ENCODE measurements at regions of chr17 and their contacts with region 1.

Region 1: DNA sequence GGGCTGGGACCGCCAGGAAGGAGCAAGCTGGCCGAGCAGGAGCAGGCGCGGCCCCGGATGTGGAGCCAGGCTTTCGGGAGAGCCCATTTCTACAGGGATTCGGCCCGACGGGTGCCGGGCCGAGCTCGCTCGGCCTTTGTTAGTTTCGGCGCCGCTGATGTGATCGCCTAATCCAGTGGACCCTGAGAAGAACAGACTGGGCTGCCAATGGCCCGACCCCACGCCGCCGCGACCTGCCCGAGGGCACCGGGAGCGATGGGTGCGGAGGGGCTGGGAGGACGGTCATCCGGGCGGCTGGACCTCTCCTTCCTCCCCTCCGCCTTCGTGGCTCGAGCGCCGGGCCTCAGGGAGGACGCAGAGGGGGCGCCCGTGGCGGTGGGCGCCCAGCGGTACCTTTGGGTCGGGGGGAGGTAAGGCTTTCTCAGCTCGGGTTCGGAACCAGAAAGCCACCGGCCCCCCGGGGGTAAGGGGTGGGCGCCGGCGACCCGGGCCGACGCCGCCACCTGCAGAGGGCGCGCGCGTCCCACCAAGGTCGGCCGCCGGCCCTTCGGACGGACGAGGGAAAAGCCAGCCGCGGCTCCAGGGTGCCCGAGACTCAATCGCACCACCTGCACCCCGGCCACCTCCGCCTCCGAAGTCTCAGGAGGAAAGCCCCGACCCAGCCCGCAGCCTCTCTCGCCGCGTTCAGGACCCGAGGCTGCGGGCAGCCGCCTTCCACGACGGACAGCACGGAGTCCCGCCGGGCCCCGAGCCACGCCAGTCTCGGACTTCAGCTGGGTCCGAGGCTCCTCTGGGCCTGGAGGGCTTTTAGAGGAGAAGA is 7.1 kb downstream of the CBX8 start:
- DNase-seq: no peak
- H3K4me3 ChIP-seq: no peak overlapping the region
- H3K27ac ChIP-seq: no peak overlapping the region
- H3K4me1 ChIP-seq: peaks cover 6% of the 10 kb centered on the region
- H3K27me3 ChIP-seq: peaks cover 40 to 57% of the 10 kb centered on the region in 2 experiments
- CTCF ChIP-seq: peak; percentile 71 to 84
- POLR2A ChIP-seq: no peak

Region 2: DNA sequence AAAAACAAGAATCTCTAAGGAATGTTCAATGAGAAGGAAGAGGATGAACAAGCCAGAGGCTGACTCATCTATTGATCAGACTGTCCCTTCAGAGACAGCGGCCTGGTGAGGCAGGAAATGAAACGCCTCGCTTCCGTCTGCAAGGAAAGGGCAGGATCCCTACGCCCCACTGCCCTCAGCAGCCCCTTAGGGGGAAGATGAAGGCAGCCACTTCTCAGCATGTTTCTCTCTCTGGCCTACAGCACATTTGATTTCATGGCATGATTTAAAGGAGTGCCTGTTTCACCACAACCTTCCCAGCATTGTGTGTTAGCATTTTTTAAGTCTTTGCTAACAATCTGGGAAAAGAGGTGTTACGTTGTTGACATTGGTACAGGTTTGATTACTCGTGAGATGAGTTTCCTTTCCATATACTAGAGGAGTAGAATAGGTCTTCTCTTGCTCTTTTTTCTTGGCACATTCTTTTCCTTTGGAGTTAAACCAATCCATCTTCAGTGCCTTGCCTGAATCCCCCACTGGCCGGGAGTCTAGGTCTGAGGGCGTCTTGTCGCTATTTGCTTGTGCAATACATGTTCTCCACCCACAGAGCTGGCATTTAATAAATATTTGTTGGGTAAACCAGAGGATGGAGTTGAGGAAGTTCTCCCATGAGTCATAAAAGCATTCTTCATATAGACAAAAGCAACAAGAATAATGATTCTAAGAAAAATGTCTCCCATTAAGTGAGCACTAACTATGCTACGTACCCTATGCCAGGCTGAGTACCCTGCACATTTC is 226.3 kb before region 1 on chr17:
- CTCF ChIA-PET with region 1: no interaction called
- POLR2A ChIA-PET with region 1: no interaction called
- dilution Hi-C with region 1: no loop called
- intact Hi-C with region 1: no loop called
- DNase-seq: no peak
- H3K4me3 ChIP-seq: no peak overlapping the region
- H3K27ac ChIP-seq: peak overlapping the region; percentile 12
- H3K4me1 ChIP-seq: peaks cover 12% of the 10 kb centered on the region
- H3K27me3 ChIP-seq: no peaks in the 10 kb centered on the region
- CTCF ChIP-seq: no peak
- POLR2A ChIP-seq: no peak

Region 3: GRCh38 chr17:79664921-79665737 is 124.6 kb before region 1 on chr17:
- CTCF ChIA-PET with region 1: no interaction called
- POLR2A ChIA-PET with region 1: no interaction called
- dilution Hi-C with region 1: no loop called
- intact Hi-C with region 1: no loop called
- DNase-seq: peak; percentile 48
- H3K4me3 ChIP-seq: no peak overlapping the region
- H3K27ac ChIP-seq: no peak overlapping the region
- H3K4me1 ChIP-seq: peaks cover 10% of the 10 kb centered on the region
- H3K27me3 ChIP-seq: peaks cover 0 to 3% of the 10 kb centered on the region in 2 experiments
- CTCF ChIP-seq: no peak
- POLR2A ChIP-seq: no peak

Region 4: GRCh38 chr17:79747508-79748295 is 42.0 kb before region 1 on chr17:
- CTCF ChIA-PET with region 1: interaction called, 20 read pairs
- POLR2A ChIA-PET with region 1: no interaction called
- dilution Hi-C with region 1: no loop called
- intact Hi-C with region 1: no loop called
- DNase-seq: no peak
- H3K4me3 ChIP-seq: no peak overlapping the region
- H3K27ac ChIP-seq: no peak overlapping the region
- H3K4me1 ChIP-seq: no peaks in the 10 kb centered on the region
- H3K27me3 ChIP-seq: peaks cover 27 to 45% of the 10 kb centered on the region in 2 experiments
- CTCF ChIP-seq: no peak
- POLR2A ChIP-seq: no peak

Region 5: GRCh38 chr17:79844869-79845600 is 55.3 kb after region 1 on chr17:
- CTCF ChIA-PET with region 1: interaction called, 10 read pairs
- POLR2A ChIA-PET with region 1: no interaction called
- dilution Hi-C with region 1: no loop called
- intact Hi-C with region 1: no loop called
- DNase-seq: no peak
- H3K4me3 ChIP-seq: no peak overlapping the region
- H3K27ac ChIP-seq: no peak overlapping the region
- H3K4me1 ChIP-seq: peaks cover 11% of the 10 kb centered on the region
- H3K27me3 ChIP-seq: peaks cover 37 to 48% of the 10 kb centered on the region in 2 experiments
- CTCF ChIP-seq: peak; percentile 56 to 88
- POLR2A ChIP-seq: no peak

Region 6: GRCh38 chr17:79923974-79924638 is 134.4 kb after region 1 on chr17:
- CTCF ChIA-PET with region 1: interaction called, 7 read pairs
- POLR2A ChIA-PET with region 1: no interaction called
- dilution Hi-C with region 1: no loop called
- intact Hi-C with region 1: loop called (anchors 2 kb)
- DNase-seq: peak; percentile 28
- H3K4me3 ChIP-seq: no peak overlapping the region
- H3K27ac ChIP-seq: no peak overlapping the region
- H3K4me1 ChIP-seq: peaks cover under 1% of the 10 kb centered on the region
- H3K27me3 ChIP-seq: no peaks in the 10 kb centered on the region
- CTCF ChIP-seq: peak; percentile 49 to 63
- POLR2A ChIP-seq: no peak